HCT116 (cell line): ENCODE measurements at regions of chr5 and their contacts with region 1.

Region 1: GRCh38 chr5:153496835-153497234 is 6.4 kb downstream of the GRIA1 start:
- DNase-seq: peak; percentile 13
- ATAC-seq: peak; percentile 63; the same call in 1 of the 2 replicates
- H3K4me3 ChIP-seq: no peak overlapping the region
- H3K27ac ChIP-seq: no peak overlapping the region
- H3K4me1 ChIP-seq: no peaks in the 10 kb centered on the region
- H3K27me3 ChIP-seq: peaks cover 39% of the 10 kb centered on the region
- CTCF ChIP-seq: peak; percentile 65 to 73 (median 68); a peak in 5 of 6 replicates
- POLR2A ChIP-seq: no peak
- RAD21 ChIP-seq: peak; percentile 87

Region 2: GRCh38 chr5:151855701-151856100 is 1641.1 kb before region 1 on chr5:
- CTCF ChIA-PET with region 1: no interaction called
- POLR2A ChIA-PET with region 1: no interaction called
- RAD21 ChIA-PET with region 1: no interaction called
- intact Hi-C with region 1: no loop called
- DNase-seq: no peak
- ATAC-seq: no peak
- H3K4me3 ChIP-seq: no peak overlapping the region
- H3K27ac ChIP-seq: no peak overlapping the region
- H3K4me1 ChIP-seq: no peaks in the 10 kb centered on the region
- H3K27me3 ChIP-seq: peaks cover 5% of the 10 kb centered on the region; the same call in 1 of the 2 replicates
- CTCF ChIP-seq: no peak
- POLR2A ChIP-seq: no peak
- RAD21 ChIP-seq: no peak

Region 3: GRCh38 chr5:152532714-152533113 is 964.1 kb before region 1 on chr5:
- CTCF ChIA-PET with region 1: no interaction called
- POLR2A ChIA-PET with region 1: no interaction called
- RAD21 ChIA-PET with region 1: no interaction called
- intact Hi-C with region 1: loop called (anchors 5 kb)
- DNase-seq: peak; percentile 42
- ATAC-seq: peak; percentile 64
- H3K4me3 ChIP-seq: no peak overlapping the region
- H3K27ac ChIP-seq: no peak overlapping the region
- H3K4me1 ChIP-seq: no peaks in the 10 kb centered on the region
- H3K27me3 ChIP-seq: peaks cover 7% of the 10 kb centered on the region; the same call in 1 of the 2 replicates
- CTCF ChIP-seq: peak in 2 of 3 experiments; percentile 57 to 63; a peak in 3 of 6 replicates
- POLR2A ChIP-seq: no peak
- RAD21 ChIP-seq: peak; percentile 78

Region 4: GRCh38 chr5:153565822-153566221 is 69.0 kb after region 1 on chr5:
- CTCF ChIA-PET with region 1: no interaction called
- POLR2A ChIA-PET with region 1: no interaction called
- RAD21 ChIA-PET with region 1: no interaction called
- intact Hi-C with region 1: no loop called
- DNase-seq: no peak
- ATAC-seq: no peak
- H3K4me3 ChIP-seq: no peak overlapping the region
- H3K27ac ChIP-seq: no peak overlapping the region
- H3K4me1 ChIP-seq: peaks cover 0 to 13% of the 10 kb centered on the region in 2 experiments; a peak in 3 of 4 replicates
- H3K27me3 ChIP-seq: no peaks in the 10 kb centered on the region
- CTCF ChIP-seq: no peak
- POLR2A ChIP-seq: no peak
- RAD21 ChIP-seq: no peak

Region 5: GRCh38 chr5:153711755-153712154 is 214.9 kb after region 1 on chr5:
- CTCF ChIA-PET with region 1: interaction called, 4 read pairs
- POLR2A ChIA-PET with region 1: no interaction called
- RAD21 ChIA-PET with region 1: no interaction called
- intact Hi-C with region 1: loop called (anchors 1 kb)
- DNase-seq: no peak
- ATAC-seq: peak; percentile 49; the same call in 1 of the 2 replicates
- H3K4me3 ChIP-seq: no peak overlapping the region
- H3K27ac ChIP-seq: no peak overlapping the region
- H3K4me1 ChIP-seq: no peaks in the 10 kb centered on the region
- H3K27me3 ChIP-seq: peaks cover 13% of the 10 kb centered on the region; the same call in 1 of the 2 replicates
- CTCF ChIP-seq: peak; percentile 19 to 38 (median 22); a peak in 4 of 6 replicates
- POLR2A ChIP-seq: no peak
- RAD21 ChIP-seq: peak; percentile 49

Region 6: DNA sequence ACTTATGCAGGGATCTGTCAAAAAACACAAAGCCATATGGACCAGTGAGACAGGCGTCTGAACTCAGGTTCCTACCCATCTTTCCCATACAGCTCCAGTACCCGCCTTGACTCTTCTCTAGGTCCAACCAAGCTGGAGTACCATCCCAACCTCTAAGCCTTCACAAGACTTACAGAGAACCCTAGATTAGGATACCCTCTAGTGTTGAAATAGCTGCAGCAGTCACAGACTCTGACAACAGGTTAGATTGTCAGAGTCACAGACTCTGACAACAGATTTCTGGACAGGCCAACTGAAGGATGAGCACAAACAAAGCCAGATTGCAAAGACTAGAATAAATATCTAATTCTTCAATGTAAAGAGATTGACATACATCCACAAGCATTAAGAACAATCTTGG is 259.7 kb after region 1 on chr5:
- CTCF ChIA-PET with region 1: no interaction called
- POLR2A ChIA-PET with region 1: no interaction called
- RAD21 ChIA-PET with region 1: no interaction called
- intact Hi-C with region 1: loop called (anchors 1 kb)
- DNase-seq: no peak
- ATAC-seq: peak; percentile 50; the same call in 1 of the 2 replicates
- H3K4me3 ChIP-seq: no peak overlapping the region
- H3K27ac ChIP-seq: no peak overlapping the region
- H3K4me1 ChIP-seq: no peaks in the 10 kb centered on the region
- H3K27me3 ChIP-seq: no peaks in the 10 kb centered on the region
- CTCF ChIP-seq: 0 out of 6 replicates have a peak, but pooled peaks of 1 of the 3 experiments have one; percentile 4
- POLR2A ChIP-seq: no peak
- RAD21 ChIP-seq: peak; percentile 35

Region 7: GRCh38 chr5:153964880-153965645 is 468.2 kb after region 1 on chr5:
- CTCF ChIA-PET with region 1: interaction called, 11 read pairs
- POLR2A ChIA-PET with region 1: no interaction called
- RAD21 ChIA-PET with region 1: interaction called in 1 of 2 experiments, 3 read pairs
- intact Hi-C with region 1: loop called (anchors 1 kb)
- DNase-seq: peak; percentile 32
- ATAC-seq: peak; percentile 93
- H3K4me3 ChIP-seq: no peak overlapping the region
- H3K27ac ChIP-seq: no peak overlapping the region
- H3K4me1 ChIP-seq: no peaks in the 10 kb centered on the region
- H3K27me3 ChIP-seq: peaks cover 18% of the 10 kb centered on the region; the same call in 1 of the 2 replicates
- CTCF ChIP-seq: peak; percentile 84 to 93 (median 91)
- POLR2A ChIP-seq: no peak
- RAD21 ChIP-seq: peak; percentile 95